Activated B cell treated with CpG ODN at 0.5 μM for 24 hours (primary cell): ENCODE measurements at regions of chr1 and their contacts with region 1.

Region 1: GRCh38 chr1:76219366-76219818 is 144.8 kb downstream of the ST6GALNAC3 start:
- DNase-seq: peak; percentile 37
- ATAC-seq: peak; percentile 89
- H3K4me3 Mint-ChIP-seq: peak overlapping the region; percentile 56
- H3K27ac Mint-ChIP-seq: peak overlapping the region; percentile 90
- H3K4me1 Mint-ChIP-seq: peaks cover 23% of the 10 kb centered on the region
- H3K27me3 Mint-ChIP-seq: no peaks in the 10 kb centered on the region
- CTCF ChIP-seq: no peak

Region 2: GRCh38 chr1:76190749-76191424 is 28.5 kb before region 1 on chr1:
- CTCF ChIA-PET with region 1: no interaction called
- POLR2A ChIA-PET with region 1: interaction called, 3 read pairs
- intact Hi-C with region 1: loop called (anchors 2 kb)
- DNase-seq: no peak
- ATAC-seq: peak; percentile 31
- H3K4me3 Mint-ChIP-seq: no peak overlapping the region
- H3K27ac Mint-ChIP-seq: no peak overlapping the region
- H3K4me1 Mint-ChIP-seq: peaks cover 15% of the 10 kb centered on the region
- H3K27me3 Mint-ChIP-seq: peaks cover 7% of the 10 kb centered on the region
- CTCF ChIP-seq: no peak

Region 3: GRCh38 chr1:76269155-76269554 is 49.8 kb after region 1 on chr1:
- CTCF ChIA-PET with region 1: no interaction called
- POLR2A ChIA-PET with region 1: no interaction called
- intact Hi-C with region 1: no loop called
- DNase-seq: no peak
- ATAC-seq: no peak
- H3K4me3 Mint-ChIP-seq: no peak overlapping the region
- H3K27ac Mint-ChIP-seq: no peak overlapping the region
- H3K4me1 Mint-ChIP-seq: peaks cover 17% of the 10 kb centered on the region
- H3K27me3 Mint-ChIP-seq: no peaks in the 10 kb centered on the region
- CTCF ChIP-seq: no peak

Region 4: DNA sequence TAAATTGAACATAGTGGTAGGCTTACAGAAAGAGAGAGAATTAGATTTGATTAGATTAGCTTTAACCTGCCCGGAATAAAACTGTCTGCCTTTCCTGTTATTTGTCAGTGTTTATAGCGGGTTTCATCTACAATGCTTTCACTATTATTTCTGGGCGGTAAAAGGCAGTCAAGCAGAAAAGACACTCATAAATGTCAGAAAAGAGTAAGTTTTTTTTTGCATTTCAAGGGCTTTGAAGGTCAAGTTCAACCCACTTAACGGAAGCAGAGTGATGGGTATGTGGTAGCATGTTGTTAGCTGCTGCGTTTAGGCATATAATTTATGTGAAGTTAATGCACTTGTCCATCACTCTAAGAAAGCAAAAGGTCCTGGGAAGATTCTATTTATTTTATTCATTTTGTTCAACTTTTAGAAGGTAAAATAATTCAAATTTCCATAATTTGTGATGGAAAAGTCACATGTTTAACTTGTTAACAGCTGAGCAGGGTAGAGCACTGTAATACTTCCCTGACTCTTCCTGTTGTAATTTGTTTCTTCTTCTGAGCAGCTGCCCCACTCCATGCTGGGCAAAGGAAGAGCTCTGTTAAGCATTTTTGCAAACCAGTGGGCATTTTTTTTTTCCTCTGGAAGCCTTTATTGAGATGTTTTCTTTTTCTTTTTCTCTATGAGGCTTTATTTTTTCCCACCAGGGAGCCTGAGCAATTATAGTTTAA is 75.2 kb after region 1 on chr1:
- CTCF ChIA-PET with region 1: no interaction called
- POLR2A ChIA-PET with region 1: interaction called, 9 read pairs
- intact Hi-C with region 1: loop called (anchors 1 kb)
- DNase-seq: no peak
- ATAC-seq: peak; percentile 85
- H3K4me3 Mint-ChIP-seq: peak overlapping the region; percentile 29
- H3K27ac Mint-ChIP-seq: peak overlapping the region; percentile 37
- H3K4me1 Mint-ChIP-seq: peaks cover 48% of the 10 kb centered on the region
- H3K27me3 Mint-ChIP-seq: no peaks in the 10 kb centered on the region
- CTCF ChIP-seq: no peak

Region 5: GRCh38 chr1:76546354-76546933 is 327.1 kb after region 1 on chr1:
- CTCF ChIA-PET with region 1: no interaction called
- POLR2A ChIA-PET with region 1: no interaction called
- intact Hi-C with region 1: no loop called
- DNase-seq: no peak
- ATAC-seq: no peak
- H3K4me3 Mint-ChIP-seq: no peak overlapping the region
- H3K27ac Mint-ChIP-seq: no peak overlapping the region
- H3K4me1 Mint-ChIP-seq: no peaks in the 10 kb centered on the region
- H3K27me3 Mint-ChIP-seq: no peaks in the 10 kb centered on the region
- CTCF ChIP-seq: no peak